ENCODE measurements at regions of chr17 and their contacts with region 1.

Region 1: DNA sequence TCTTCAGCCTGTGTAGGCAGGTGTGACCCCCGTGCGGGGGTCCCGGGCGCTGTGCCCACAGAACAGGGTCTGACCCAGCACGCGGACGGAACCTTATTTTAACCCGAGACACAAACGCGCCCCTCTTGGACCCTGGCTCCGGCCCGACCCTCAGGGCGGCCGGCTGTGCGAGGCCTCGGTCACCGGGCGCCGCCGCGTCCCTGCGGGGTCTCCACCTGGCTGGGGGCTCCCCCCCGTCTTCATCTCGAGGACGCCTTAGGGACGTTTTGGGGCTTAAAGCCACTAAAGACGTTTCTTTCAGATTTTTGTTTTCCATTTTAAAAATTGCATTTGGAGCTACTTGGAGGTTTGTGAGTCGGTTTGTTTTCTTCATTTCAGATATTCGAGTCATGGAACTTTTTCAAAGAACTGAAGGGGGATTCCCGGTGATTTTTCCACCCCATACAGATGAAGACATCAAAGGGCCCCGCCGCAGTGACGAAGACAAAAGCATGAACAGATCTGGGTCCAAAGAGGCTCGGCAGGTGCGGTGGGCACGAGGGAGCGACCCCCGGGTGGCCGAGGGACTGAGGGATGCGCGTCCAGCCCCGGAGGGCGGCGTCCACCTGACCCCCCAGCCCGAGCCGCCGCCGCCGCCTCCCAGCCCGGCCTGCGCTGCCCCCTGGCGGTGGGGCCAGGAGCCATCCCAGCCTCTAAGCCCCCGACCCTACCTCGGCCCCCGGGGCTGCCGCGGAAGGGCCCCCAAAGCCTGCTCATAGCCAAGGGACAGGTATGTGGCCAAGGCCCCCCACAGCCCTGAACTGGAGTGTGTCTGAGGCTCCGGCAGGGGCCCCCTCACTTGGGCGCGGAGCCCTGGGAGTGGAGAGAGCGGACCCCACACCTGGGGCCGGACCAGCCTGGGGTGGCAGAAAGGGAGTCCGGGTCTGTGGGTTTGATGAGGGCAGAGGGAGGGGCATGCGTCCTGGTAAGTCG is 3.8 kb upstream of the CD7 start:
- DNase-seq: peak; percentile 76
- ATAC-seq: peak; percentile 81
- H3K4me3 Mint-ChIP-seq: peak overlapping the region; percentile 73
- H3K27ac Mint-ChIP-seq: peak overlapping the region; percentile 56
- H3K4me1 Mint-ChIP-seq: peaks cover 3% of the 10 kb centered on the region
- H3K27me3 Mint-ChIP-seq: peaks cover 6% of the 10 kb centered on the region
- CTCF ChIP-seq: peak; percentile 48

Region 2: GRCh38 chr17:82236142-82236981 is 84.9 kb before region 1 on chr17:
- CTCF ChIA-PET with region 1: interaction called, 12 read pairs
- POLR2A ChIA-PET with region 1: interaction called, 6 read pairs
- intact Hi-C with region 1: loop called (anchors 1 kb)
- DNase-seq: peak; percentile 58
- ATAC-seq: peak; percentile 64
- H3K4me3 Mint-ChIP-seq: no peak overlapping the region
- H3K27ac Mint-ChIP-seq: no peak overlapping the region
- H3K4me1 Mint-ChIP-seq: peaks cover 53% of the 10 kb centered on the region
- H3K27me3 Mint-ChIP-seq: no peaks in the 10 kb centered on the region
- CTCF ChIP-seq: no peak

Region 3: GRCh38 chr17:82244413-82245140 is 76.7 kb before region 1 on chr17:
- CTCF ChIA-PET with region 1: interaction called, 3 read pairs
- POLR2A ChIA-PET with region 1: interaction called, 4 read pairs
- intact Hi-C with region 1: loop called (anchors 1 kb)
- DNase-seq: no peak
- ATAC-seq: no peak
- H3K4me3 Mint-ChIP-seq: no peak overlapping the region
- H3K27ac Mint-ChIP-seq: no peak overlapping the region
- H3K4me1 Mint-ChIP-seq: peaks cover 26% of the 10 kb centered on the region
- H3K27me3 Mint-ChIP-seq: no peaks in the 10 kb centered on the region
- CTCF ChIP-seq: no peak

Region 4: DNA sequence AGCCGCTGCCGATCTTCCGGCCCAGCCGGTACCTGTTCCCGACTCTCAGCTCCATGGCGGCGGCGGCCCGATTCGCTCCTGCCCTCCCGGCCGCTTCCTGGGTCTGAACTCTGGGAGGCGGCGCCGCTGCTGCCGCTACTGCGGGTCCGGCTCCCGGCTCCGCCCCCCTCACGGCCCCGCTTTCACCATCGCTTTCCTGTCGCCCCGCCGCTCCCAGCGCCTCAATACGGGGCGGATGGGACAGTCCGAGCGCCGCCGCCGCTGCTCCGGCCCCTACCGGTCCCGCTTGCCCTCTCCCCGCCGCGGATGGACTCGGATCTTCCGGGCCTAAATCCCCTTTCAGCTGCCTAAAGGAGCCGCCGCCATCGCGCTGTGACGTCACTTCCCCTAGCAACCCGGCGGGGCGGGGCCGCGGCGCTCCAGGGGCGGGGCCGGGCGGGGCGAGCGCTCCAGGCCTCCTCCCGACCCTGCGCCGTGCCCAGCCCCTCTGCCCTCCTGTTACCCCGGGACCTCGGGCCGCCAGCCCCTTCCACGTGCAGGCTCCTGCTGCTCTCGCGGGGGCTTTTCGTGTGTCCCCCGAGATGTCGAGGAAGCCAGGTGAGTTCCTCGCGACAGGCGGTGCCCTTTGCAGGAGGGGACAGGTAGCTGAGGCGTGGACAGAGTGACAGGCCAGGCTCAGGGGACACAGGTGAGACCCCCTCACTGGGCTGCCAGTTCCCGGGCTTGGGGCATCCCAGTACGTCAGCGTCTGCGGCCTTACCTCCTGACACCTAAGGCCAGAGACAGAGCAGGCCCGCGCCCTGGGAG is 47.7 kb before region 1 on chr17 and contains the start of gene CSNK1D:
- CTCF ChIA-PET with region 1: no interaction called
- POLR2A ChIA-PET with region 1: interaction called, 4 read pairs
- intact Hi-C with region 1: loop called (anchors 1 kb)
- DNase-seq: peak; percentile 97
- ATAC-seq: peak; percentile 83
- H3K4me3 Mint-ChIP-seq: peak within 1 kb of the TSS; percentile 94
- H3K27ac Mint-ChIP-seq: peak within 1 kb of the TSS; percentile 97
- H3K4me1 Mint-ChIP-seq: peaks cover 45% of the 10 kb centered on the region
- H3K27me3 Mint-ChIP-seq: no peaks in the 10 kb centered on the region
- CTCF ChIP-seq: no peak
- total RNA-seq, gene CSNK1D: 147 and 170 TPM in 2 replicates

Region 5: GRCh38 chr17:82343560-82343959 is 22.3 kb after region 1 on chr17:
- CTCF ChIA-PET with region 1: no interaction called
- POLR2A ChIA-PET with region 1: no interaction called
- intact Hi-C with region 1: no loop called
- DNase-seq: no peak
- ATAC-seq: no peak
- H3K4me3 Mint-ChIP-seq: no peak overlapping the region
- H3K27ac Mint-ChIP-seq: no peak overlapping the region
- H3K4me1 Mint-ChIP-seq: no peaks in the 10 kb centered on the region
- H3K27me3 Mint-ChIP-seq: peaks cover 10% of the 10 kb centered on the region
- CTCF ChIP-seq: no peak